ENCODE measurements at regions of chr2 and their contacts with region 1.

Region 1: GRCh38 chr2:38076606-38077430 is 867 bp upstream of the CYP1B1 start:
- DNase-seq: peak; percentile 84
- H3K4me3 ChIP-seq: peak overlapping the region; percentile 40 to 54 (median 41)
- H3K27ac ChIP-seq: peak overlapping the region; percentile 72
- H3K4me1 ChIP-seq: peaks cover 30% of the 10 kb centered on the region
- H3K27me3 ChIP-seq: no peaks in the 10 kb centered on the region
- CTCF ChIP-seq: peak; percentile 9 to 42

Region 2: GRCh38 chr2:37890893-37891495 is 185.8 kb before region 1 on chr2:
- CTCF ChIA-PET with region 1: no interaction called
- dilution Hi-C with region 1: no loop called
- in situ Hi-C with region 1: no loop called
- intact Hi-C with region 1: loop called (anchors 10 kb)
- DNase-seq: peak; percentile 40
- H3K4me3 ChIP-seq: no peak overlapping the region
- H3K27ac ChIP-seq: no peak overlapping the region
- H3K4me1 ChIP-seq: peaks cover 16% of the 10 kb centered on the region
- H3K27me3 ChIP-seq: no peaks in the 10 kb centered on the region
- CTCF ChIP-seq: peak; percentile 67 to 82

Region 3: DNA sequence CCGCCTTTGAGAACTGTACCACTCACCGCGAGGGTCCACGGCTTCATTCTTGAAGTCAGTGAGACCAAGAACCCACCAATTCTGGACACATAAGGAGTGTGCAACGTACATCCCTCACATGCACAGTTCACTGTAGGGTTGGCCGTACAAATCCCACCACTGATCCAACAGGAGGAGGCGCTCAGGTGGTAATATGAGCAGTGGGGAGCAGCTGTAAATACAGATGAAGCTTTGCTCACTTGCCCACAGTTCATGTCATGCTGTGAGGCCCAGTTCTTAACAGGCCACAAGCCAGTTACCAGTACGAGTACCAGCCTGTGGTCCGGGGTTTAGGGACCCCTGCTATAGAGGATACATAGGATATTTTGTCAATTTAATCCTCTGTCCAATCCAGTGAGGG is 55.2 kb before region 1 on chr2:
- CTCF ChIA-PET with region 1: no interaction called
- dilution Hi-C with region 1: loop called (anchors 5 kb)
- in situ Hi-C with region 1: no loop called
- intact Hi-C with region 1: no loop called
- DNase-seq: no peak
- H3K4me3 ChIP-seq: no peak overlapping the region
- H3K27ac ChIP-seq: no peak overlapping the region
- H3K4me1 ChIP-seq: peaks cover 2% of the 10 kb centered on the region
- H3K27me3 ChIP-seq: no peaks in the 10 kb centered on the region
- CTCF ChIP-seq: no peak

Region 4: GRCh38 chr2:38106405-38107094 is 29.7 kb after region 1 on chr2:
- CTCF ChIA-PET with region 1: interaction called, 15 read pairs
- dilution Hi-C with region 1: no loop called
- in situ Hi-C with region 1: no loop called
- intact Hi-C with region 1: loop called (anchors 1 kb)
- DNase-seq: peak; percentile 60
- H3K4me3 ChIP-seq: no peak overlapping the region
- H3K27ac ChIP-seq: peak overlapping the region; percentile 74
- H3K4me1 ChIP-seq: peaks cover 27% of the 10 kb centered on the region
- H3K27me3 ChIP-seq: no peaks in the 10 kb centered on the region
- CTCF ChIP-seq: no peak

Region 5: DNA sequence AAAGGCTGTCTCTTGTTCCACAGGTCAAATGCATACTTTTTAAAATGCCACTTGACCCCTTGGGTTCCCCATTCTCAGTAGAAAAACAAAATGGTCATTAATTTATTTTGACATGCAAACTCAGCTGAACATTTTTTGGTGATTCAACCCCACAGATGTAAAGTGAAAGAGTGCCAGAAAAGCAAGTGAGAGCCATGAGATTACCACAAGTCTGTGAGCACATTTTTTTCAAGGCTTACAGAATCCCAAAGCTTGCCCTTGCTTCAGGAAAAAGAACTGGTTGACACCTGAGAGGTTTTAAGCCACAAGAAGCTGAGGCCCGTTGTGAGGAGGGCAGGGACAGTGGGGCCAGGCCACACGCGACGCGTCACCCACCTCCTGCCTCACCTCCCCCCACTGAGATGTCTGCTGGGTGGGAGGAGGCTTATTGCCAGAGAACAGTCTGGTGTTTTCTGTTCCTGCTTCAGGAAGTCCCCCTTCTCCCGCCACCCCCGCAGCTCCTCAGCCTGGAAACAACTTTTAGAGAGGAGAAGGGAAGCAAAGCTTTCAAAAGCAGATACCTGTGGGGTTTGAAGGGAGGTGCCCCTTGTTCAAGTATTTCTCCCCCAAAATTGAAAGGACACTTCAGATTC is 69.6 kb after region 1 on chr2:
- CTCF ChIA-PET with region 1: no interaction called
- dilution Hi-C with region 1: no loop called
- in situ Hi-C with region 1: no loop called
- intact Hi-C with region 1: loop called (anchors 1 kb)
- DNase-seq: peak; percentile 90
- H3K4me3 ChIP-seq: peak overlapping the region in 1 of 3 experiments; percentile 30
- H3K27ac ChIP-seq: peak overlapping the region; percentile 98
- H3K4me1 ChIP-seq: peaks cover 40% of the 10 kb centered on the region
- H3K27me3 ChIP-seq: no peaks in the 10 kb centered on the region
- CTCF ChIP-seq: no peak

Region 6: DNA sequence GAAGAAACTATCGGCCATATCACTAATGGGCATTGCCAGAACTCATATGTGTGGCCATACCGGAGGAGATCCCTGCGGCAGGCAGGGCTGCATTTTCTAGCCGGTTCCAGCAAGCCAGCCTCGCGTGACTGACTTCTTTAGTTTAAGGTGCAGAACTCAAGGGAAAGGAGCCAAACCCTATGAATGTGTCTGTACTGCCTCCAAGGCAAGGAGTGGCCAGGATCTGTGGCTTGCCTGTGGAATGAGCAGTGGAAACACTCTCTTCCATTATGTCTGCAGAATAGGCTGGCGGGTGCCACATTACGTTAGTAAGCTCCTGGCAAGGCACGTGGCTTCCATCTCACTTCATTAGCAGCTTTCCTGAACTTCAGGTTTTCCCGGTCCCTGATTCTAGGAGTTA is 162.6 kb after region 1 on chr2:
- CTCF ChIA-PET with region 1: no interaction called
- dilution Hi-C with region 1: no loop called
- in situ Hi-C with region 1: no loop called
- intact Hi-C with region 1: loop called (anchors 1 kb)
- DNase-seq: peak; percentile 78
- H3K4me3 ChIP-seq: no peak overlapping the region
- H3K27ac ChIP-seq: peak overlapping the region; percentile 15
- H3K4me1 ChIP-seq: peaks cover 10% of the 10 kb centered on the region
- H3K27me3 ChIP-seq: no peaks in the 10 kb centered on the region
- CTCF ChIP-seq: no peak

Region 7: GRCh38 chr2:38315707-38316333 is 239.0 kb after region 1 on chr2:
- CTCF ChIA-PET with region 1: interaction called, 20 read pairs
- dilution Hi-C with region 1: no loop called
- in situ Hi-C with region 1: no loop called
- intact Hi-C with region 1: no loop called
- DNase-seq: peak; percentile 35
- H3K4me3 ChIP-seq: no peak overlapping the region
- H3K27ac ChIP-seq: no peak overlapping the region
- H3K4me1 ChIP-seq: peaks cover 6% of the 10 kb centered on the region
- H3K27me3 ChIP-seq: no peaks in the 10 kb centered on the region
- CTCF ChIP-seq: peak; percentile 68 to 71

Measured in mammary epithelial cell (primary cell).